ENCODE measurements at regions of chr7 and their contacts with region 1.

Region 1: GRCh38 chr7:121337398-121337797 is 8.6 kb downstream of the WNT16 start:
- DNase-seq: no peak
- ATAC-seq: peak; percentile 55
- H3K4me3 ChIP-seq: no peak overlapping the region
- H3K27ac ChIP-seq: no peak overlapping the region
- H3K4me1 ChIP-seq: no peaks in the 10 kb centered on the region
- H3K27me3 ChIP-seq: peaks cover 0 to 18% of the 10 kb centered on the region in 2 experiments; a peak in 1 of 5 replicates
- CTCF ChIP-seq: peak; percentile 25; the same call in 1 of the 2 replicates
- EP300 ChIP-seq: no peak
- POLR2A ChIP-seq: no peak
- RAD21 ChIP-seq: no peak

Region 2: GRCh38 chr7:121385800-121386179 is 48.4 kb after region 1 on chr7:
- CTCF ChIA-PET with region 1: no interaction called
- POLR2A ChIA-PET with region 1: no interaction called
- in situ Hi-C with region 1: no loop called
- intact Hi-C with region 1: loop called (anchors 1 kb)
- DNase-seq: no peak
- ATAC-seq: no peak
- H3K4me3 ChIP-seq: no peak overlapping the region
- H3K27ac ChIP-seq: no peak overlapping the region
- H3K4me1 ChIP-seq: peaks cover 7% of the 10 kb centered on the region; the same call in 1 of the 2 replicates
- H3K27me3 ChIP-seq: no peaks in the 10 kb centered on the region
- CTCF ChIP-seq: no peak
- EP300 ChIP-seq: no peak
- POLR2A ChIP-seq: no peak
- RAD21 ChIP-seq: no peak